ENCODE measurements at regions of chr3 and their contacts with region 1.

Region 1: GRCh38 chr3:47420511-47421484 is 40.0 kb downstream of the PTPN23 start:
- DNase-seq: peak; percentile 78 to 94 (median 86)
- ATAC-seq: peak; percentile 99
- H3K4me3 ChIP-seq: no peak overlapping the region
- H3K4me3 Mint-ChIP-seq: peak overlapping the region; percentile 57
- H3K27ac ChIP-seq: peak overlapping the region; percentile 62 to 82
- H3K27ac Mint-ChIP-seq: peak overlapping the region; percentile 94
- H3K4me1 ChIP-seq: peaks cover 17% of the 10 kb centered on the region
- H3K4me1 Mint-ChIP-seq: peaks cover 12% of the 10 kb centered on the region
- H3K27me3 ChIP-seq: no peaks in the 10 kb centered on the region
- H3K27me3 Mint-ChIP-seq: no peaks in the 10 kb centered on the region
- CTCF ChIP-seq: peak; percentile 84

Region 2: GRCh38 chr3:47475570-47476329 is 55.0 kb after region 1 on chr3 and contains the start of gene SCAP:
- CTCF ChIA-PET with region 1: interaction called, 51 read pairs
- POLR2A ChIA-PET with region 1: interaction called, 16 read pairs
- intact Hi-C with region 1: loop called (anchors 1 kb)
- DNase-seq: peak; percentile 93 to 98 (median 96)
- ATAC-seq: peak; percentile 92
- H3K4me3 ChIP-seq: peak within 1 kb of the TSS; percentile 68
- H3K4me3 Mint-ChIP-seq: peak within 1 kb of the TSS; percentile 99
- H3K27ac ChIP-seq: peak within 1 kb of the TSS; percentile 73 to 74
- H3K27ac Mint-ChIP-seq: peak within 1 kb of the TSS; percentile 89
- H3K4me1 ChIP-seq: peaks cover 28% of the 10 kb centered on the region
- H3K4me1 Mint-ChIP-seq: peaks cover 44% of the 10 kb centered on the region
- H3K27me3 ChIP-seq: no peaks in the 10 kb centered on the region
- H3K27me3 Mint-ChIP-seq: no peaks in the 10 kb centered on the region
- CTCF ChIP-seq: peak; percentile 90
- total RNA-seq, gene SCAP: 58.3 to 60.3 TPM

Region 3: GRCh38 chr3:47491186-47491585 is 70.4 kb after region 1 on chr3:
- CTCF ChIA-PET with region 1: no interaction called
- POLR2A ChIA-PET with region 1: no interaction called
- intact Hi-C with region 1: no loop called
- DNase-seq: peak in 1 of 14 experiments; percentile 11
- ATAC-seq: no peak
- H3K4me3 ChIP-seq: no peak overlapping the region
- H3K4me3 Mint-ChIP-seq: no peak overlapping the region
- H3K27ac ChIP-seq: no peak overlapping the region
- H3K27ac Mint-ChIP-seq: no peak overlapping the region
- H3K4me1 ChIP-seq: no peaks in the 10 kb centered on the region
- H3K4me1 Mint-ChIP-seq: no peaks in the 10 kb centered on the region
- H3K27me3 ChIP-seq: no peaks in the 10 kb centered on the region
- H3K27me3 Mint-ChIP-seq: no peaks in the 10 kb centered on the region
- CTCF ChIP-seq: no peak

Region 4: DNA sequence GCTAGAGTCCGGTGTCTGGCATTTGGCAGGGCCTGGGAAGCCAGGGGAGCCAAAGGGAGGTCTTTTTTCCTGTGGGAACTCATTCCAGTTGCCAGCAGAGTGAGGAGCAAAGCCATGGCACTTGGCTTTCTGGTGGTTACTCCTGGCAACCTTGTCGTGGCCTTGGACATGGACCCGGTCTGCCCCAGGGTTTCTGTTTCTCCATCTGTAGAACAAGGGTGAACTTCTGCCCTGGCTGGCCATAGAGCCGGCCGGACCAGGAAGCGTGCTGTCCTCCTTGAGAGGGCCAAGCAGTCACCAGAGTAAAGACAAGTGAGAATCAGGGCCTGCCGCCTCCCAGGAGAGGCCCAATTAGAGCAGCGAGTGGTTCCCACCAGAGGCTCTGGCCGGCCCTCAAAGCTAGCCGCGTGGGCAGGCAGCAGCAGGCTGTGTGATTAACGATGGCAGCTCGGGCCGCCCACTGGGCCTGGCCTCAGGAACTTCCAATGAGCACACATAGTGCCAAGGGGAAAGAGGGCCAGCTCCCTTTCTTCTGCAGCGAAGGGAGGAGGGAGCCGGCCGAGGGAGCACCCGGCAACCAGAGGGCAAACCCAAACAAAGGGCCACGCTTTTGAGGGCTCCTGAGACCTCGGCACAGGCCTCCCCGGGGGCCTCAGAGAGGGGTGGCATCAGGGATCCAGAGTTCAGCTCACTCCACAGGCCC is 121.8 kb after region 1 on chr3:
- CTCF ChIA-PET with region 1: no interaction called
- POLR2A ChIA-PET with region 1: no interaction called
- intact Hi-C with region 1: no loop called
- DNase-seq: no peak
- ATAC-seq: no peak
- H3K4me3 ChIP-seq: no peak overlapping the region
- H3K4me3 Mint-ChIP-seq: no peak overlapping the region
- H3K27ac ChIP-seq: no peak overlapping the region
- H3K27ac Mint-ChIP-seq: no peak overlapping the region
- H3K4me1 ChIP-seq: no peaks in the 10 kb centered on the region
- H3K4me1 Mint-ChIP-seq: no peaks in the 10 kb centered on the region
- H3K27me3 ChIP-seq: no peaks in the 10 kb centered on the region
- H3K27me3 Mint-ChIP-seq: no peaks in the 10 kb centered on the region
- CTCF ChIP-seq: no peak

Region 5: DNA sequence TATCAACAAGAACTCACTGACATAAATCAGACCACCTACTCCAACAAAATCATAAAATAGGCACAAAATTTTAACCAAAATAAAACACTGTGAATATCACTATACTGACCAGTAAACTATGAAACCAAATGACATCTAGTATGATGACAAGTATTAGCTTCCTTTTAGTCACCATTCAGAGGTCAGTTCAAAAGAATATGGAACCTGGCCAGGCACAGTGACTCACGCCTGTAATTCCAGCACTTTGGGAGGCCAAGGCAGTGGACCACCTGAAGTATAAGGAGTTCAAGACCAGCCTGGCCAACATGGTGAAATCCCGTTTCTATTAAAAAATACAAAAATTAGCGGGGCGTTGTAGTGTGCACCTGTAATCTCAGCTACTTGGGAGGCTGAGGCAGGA is 295.1 kb after region 1 on chr3:
- CTCF ChIA-PET with region 1: no interaction called
- POLR2A ChIA-PET with region 1: no interaction called
- intact Hi-C with region 1: no loop called
- DNase-seq: no peak
- ATAC-seq: no peak
- H3K4me3 ChIP-seq: no peak overlapping the region
- H3K4me3 Mint-ChIP-seq: no peak overlapping the region
- H3K27ac ChIP-seq: no peak overlapping the region
- H3K27ac Mint-ChIP-seq: peak overlapping the region; percentile 5
- H3K4me1 ChIP-seq: no peaks in the 10 kb centered on the region
- H3K4me1 Mint-ChIP-seq: peaks cover 5% of the 10 kb centered on the region
- H3K27me3 ChIP-seq: no peaks in the 10 kb centered on the region
- H3K27me3 Mint-ChIP-seq: no peaks in the 10 kb centered on the region
- CTCF ChIP-seq: no peak

Region 6: GRCh38 chr3:47791193-47791855 is 370.5 kb after region 1 on chr3:
- CTCF ChIA-PET with region 1: interaction called, 6 read pairs
- POLR2A ChIA-PET with region 1: interaction called, 3 read pairs
- intact Hi-C with region 1: loop called (anchors 2 kb)
- DNase-seq: no peak
- ATAC-seq: no peak
- H3K4me3 ChIP-seq: no peak overlapping the region
- H3K4me3 Mint-ChIP-seq: peak overlapping the region; percentile 31
- H3K27ac ChIP-seq: no peak overlapping the region
- H3K27ac Mint-ChIP-seq: no peak overlapping the region
- H3K4me1 ChIP-seq: peaks cover 6% of the 10 kb centered on the region
- H3K4me1 Mint-ChIP-seq: peaks cover 4% of the 10 kb centered on the region
- H3K27me3 ChIP-seq: no peaks in the 10 kb centered on the region
- H3K27me3 Mint-ChIP-seq: no peaks in the 10 kb centered on the region
- CTCF ChIP-seq: no peak

Region 7: DNA sequence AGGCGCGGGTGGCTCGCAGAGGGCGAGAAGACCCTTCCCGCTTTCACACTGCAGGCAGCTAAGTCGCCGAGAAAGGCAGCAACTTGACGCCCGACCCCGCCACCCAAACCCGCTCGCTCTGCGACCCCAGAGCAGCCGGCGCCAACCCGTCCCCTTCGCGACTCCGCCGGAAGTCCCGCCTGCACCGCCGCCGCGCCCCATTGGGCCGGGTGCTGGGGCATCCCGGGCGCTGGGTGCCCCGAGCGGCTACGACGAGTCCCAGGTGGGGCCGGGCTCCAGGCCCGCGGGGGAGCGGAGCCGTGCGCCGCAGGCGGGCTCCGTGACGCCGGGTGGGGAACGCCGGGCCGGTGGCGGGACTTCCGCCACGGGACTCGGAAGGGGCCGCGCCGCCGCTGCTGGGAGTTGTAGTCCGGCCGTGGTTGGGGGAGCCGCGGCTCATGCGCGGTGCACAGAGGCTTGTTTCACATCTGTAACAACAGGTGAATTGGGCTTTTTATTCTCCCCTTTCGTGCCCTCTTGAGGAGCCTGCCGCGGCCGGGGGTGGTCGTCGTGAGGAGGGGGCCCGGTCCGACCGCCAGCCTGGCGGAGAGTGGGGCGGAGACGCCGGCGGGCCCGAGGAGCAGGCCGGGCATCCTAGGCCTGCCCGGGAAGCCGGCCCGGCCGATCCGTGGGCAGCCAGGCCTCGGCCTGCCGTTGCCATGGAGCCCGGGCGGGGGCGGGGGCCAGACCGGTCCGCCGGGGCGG is 382.1 kb after region 1 on chr3 and contains the start of gene DHX30:
- CTCF ChIA-PET with region 1: no interaction called
- POLR2A ChIA-PET with region 1: no interaction called
- intact Hi-C with region 1: loop called in 1 of 2 experiments (anchors 5 kb)
- DNase-seq: peak; percentile 63 to 94 (median 80)
- ATAC-seq: peak; percentile 90
- H3K4me3 ChIP-seq: peak within 1 kb of the TSS; percentile 98
- H3K4me3 Mint-ChIP-seq: peak within 1 kb of the TSS; percentile 97
- H3K27ac ChIP-seq: peak within 1 kb of the TSS; percentile 83 to 85
- H3K27ac Mint-ChIP-seq: peak within 1 kb of the TSS; percentile 96
- H3K4me1 ChIP-seq: peaks cover 26% of the 10 kb centered on the region
- H3K4me1 Mint-ChIP-seq: peaks cover 20% of the 10 kb centered on the region
- H3K27me3 ChIP-seq: no peaks in the 10 kb centered on the region
- H3K27me3 Mint-ChIP-seq: no peaks in the 10 kb centered on the region
- CTCF ChIP-seq: no peak
- total RNA-seq, gene DHX30: 75.1 to 75.6 TPM

Measured in CD4-positive, alpha-beta T cell (primary cell).